Body of pancreas (tissue), 4 donors: ENCODE measurements at regions of chr1 and their contacts with region 1.

Region 1: GRCh38 chr1:44377925-44378784 is 23.1 kb upstream of the ERI3 start:
- DNase-seq: peak; percentile 49 to 65 (median 56)
- ATAC-seq: no peak
- H3K4me3 ChIP-seq: no peak overlapping the region
- H3K27ac ChIP-seq: no peak overlapping the region
- H3K4me1 ChIP-seq: no peaks in the 10 kb centered on the region
- H3K27me3 ChIP-seq: no peaks in the 10 kb centered on the region
- CTCF ChIP-seq: peak; percentile 50 to 76 (median 64)
- POLR2A ChIP-seq: no peak

Region 2: GRCh38 chr1:44437107-44437716 is 59.1 kb after region 1 on chr1:
- intact Hi-C with region 1: no loop called
- DNase-seq: peak in 2 of 4 donors; percentile 13
- ATAC-seq: no peak
- H3K4me3 ChIP-seq: no peak overlapping the region
- H3K27ac ChIP-seq: no peak overlapping the region
- H3K4me1 ChIP-seq: no peaks in the 10 kb centered on the region
- H3K27me3 ChIP-seq: no peaks in the 10 kb centered on the region
- CTCF ChIP-seq: no peak
- POLR2A ChIP-seq: no peak

Region 3: GRCh38 chr1:44645476-44646244 is 267.5 kb after region 1 on chr1:
- intact Hi-C with region 1: loop called (anchors 10 kb)
- DNase-seq: no peak
- ATAC-seq: no peak
- H3K4me3 ChIP-seq: no peak overlapping the region
- H3K27ac ChIP-seq: no peak overlapping the region
- H3K4me1 ChIP-seq: no peaks in the 10 kb centered on the region
- H3K27me3 ChIP-seq: no peaks in the 10 kb centered on the region
- CTCF ChIP-seq: no peak
- POLR2A ChIP-seq: no peak